B cell (primary cell): ENCODE measurements at regions of chr7 and their contacts with region 1.

Region 1: GRCh38 chr7:158829342-158830210 is at the start of gene ESYT2:
- DNase-seq: peak; percentile 100
- ATAC-seq: peak; percentile 78
- H3K4me3 ChIP-seq: peak within 1 kb of the TSS; percentile 54 to 88 (median 69)
- H3K4me3 Mint-ChIP-seq: peak within 1 kb of the TSS; percentile 92
- H3K27ac ChIP-seq: peak within 1 kb of the TSS; percentile 97 to 99
- H3K27ac Mint-ChIP-seq: peak within 1 kb of the TSS; percentile 97
- H3K4me1 ChIP-seq: peaks cover 16 to 18% of the 10 kb centered on the region in 2 donors
- H3K4me1 Mint-ChIP-seq: peaks cover 22% of the 10 kb centered on the region
- H3K27me3 ChIP-seq: peaks cover 0 to 7% (median 0%) of the 10 kb centered on the region in 4 experiments
- H3K27me3 Mint-ChIP-seq: peaks cover 7% of the 10 kb centered on the region
- CTCF ChIP-seq: no peak
- total RNA-seq, gene ESYT2: 32.4 and 34.2 TPM in 2 replicates

Region 2: GRCh38 chr7:158541346-158542010 is 288.1 kb before region 1 on chr7:
- CTCF ChIA-PET with region 1: no interaction called
- POLR2A ChIA-PET with region 1: no interaction called
- intact Hi-C with region 1: no loop called
- DNase-seq: peak; percentile 79
- ATAC-seq: peak; percentile 86
- H3K4me3 ChIP-seq: peak overlapping the region in 1 of 5 experiments; percentile 38
- H3K4me3 Mint-ChIP-seq: peak overlapping the region; percentile 71
- H3K27ac ChIP-seq: no peak overlapping the region
- H3K27ac Mint-ChIP-seq: peak overlapping the region; percentile 1
- H3K4me1 ChIP-seq: peaks cover 0 to 12% of the 10 kb centered on the region in 2 donors
- H3K4me1 Mint-ChIP-seq: peaks cover 13% of the 10 kb centered on the region
- H3K27me3 ChIP-seq: no peaks in the 10 kb centered on the region
- H3K27me3 Mint-ChIP-seq: no peaks in the 10 kb centered on the region
- CTCF ChIP-seq: no peak

Region 3: DNA sequence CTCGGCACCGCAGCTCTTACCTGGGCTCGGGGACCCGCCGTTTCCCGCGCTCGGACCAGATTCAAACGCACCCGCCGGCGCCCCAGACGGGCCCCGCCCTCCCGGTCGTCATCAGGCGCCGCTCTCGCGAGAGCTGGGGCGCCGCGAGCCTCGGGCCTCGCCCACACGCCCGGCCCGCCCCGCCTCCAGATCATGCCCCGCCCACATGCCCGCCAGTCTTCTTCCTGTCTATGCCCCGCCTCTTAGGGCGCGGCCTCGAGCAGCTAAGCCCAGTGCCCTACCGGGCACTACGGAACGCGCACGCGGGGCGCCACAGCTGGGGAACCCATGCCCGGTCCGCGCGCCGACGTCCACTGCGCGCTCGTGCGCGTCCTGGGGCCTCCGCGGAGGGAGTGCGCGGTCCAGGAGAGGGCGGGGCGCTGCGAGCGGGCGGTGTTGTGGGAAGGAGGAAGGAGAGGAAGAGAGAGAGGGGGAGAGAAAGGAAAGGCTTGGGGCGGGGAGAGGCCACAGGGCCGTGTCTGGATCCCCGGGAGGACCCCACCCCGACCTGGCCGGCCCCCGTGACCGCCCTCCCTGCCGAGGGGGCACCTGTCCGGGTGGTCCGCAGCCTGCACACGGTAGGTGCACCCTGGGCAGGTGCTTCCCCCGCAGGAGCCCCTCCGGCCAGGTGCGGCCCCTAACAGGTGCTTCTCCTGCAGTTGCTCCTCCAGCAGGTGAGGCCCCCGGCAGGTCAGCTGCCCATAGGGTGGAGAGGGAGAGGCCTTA is 124.7 kb before region 1 on chr7 and contains the start of gene NCAPG2:
- CTCF ChIA-PET with region 1: interaction called, 6 read pairs
- POLR2A ChIA-PET with region 1: interaction called, 5 read pairs
- intact Hi-C with region 1: loop called (anchors 1 kb)
- DNase-seq: peak; percentile 98
- ATAC-seq: peak; percentile 97
- H3K4me3 ChIP-seq: peak within 1 kb of the TSS; percentile 24 to 88 (median 81)
- H3K4me3 Mint-ChIP-seq: peak within 1 kb of the TSS; percentile 92
- H3K27ac ChIP-seq: peak within 1 kb of the TSS; percentile 36 to 85
- H3K27ac Mint-ChIP-seq: peak within 1 kb of the TSS; percentile 94
- H3K4me1 ChIP-seq: peaks cover 6 to 12% of the 10 kb centered on the region in 2 donors
- H3K4me1 Mint-ChIP-seq: peaks cover 16% of the 10 kb centered on the region
- H3K27me3 ChIP-seq: no peaks in the 10 kb centered on the region
- H3K27me3 Mint-ChIP-seq: no peaks in the 10 kb centered on the region
- CTCF ChIP-seq: peak; percentile 28
- total RNA-seq, gene NCAPG2: 9.8 and 11.4 TPM in 2 replicates

Region 4: GRCh38 chr7:158818325-158819213 is 11.0 kb before region 1 on chr7:
- CTCF ChIA-PET with region 1: no interaction called
- POLR2A ChIA-PET with region 1: no interaction called
- intact Hi-C with region 1: loop called (anchors 1 kb)
- DNase-seq: peak; percentile 88
- ATAC-seq: peak; percentile 83
- H3K4me3 ChIP-seq: peak overlapping the region in 3 of 5 experiments; percentile 0 to 27 (median 15)
- H3K4me3 Mint-ChIP-seq: peak overlapping the region; percentile 52
- H3K27ac ChIP-seq: peak overlapping the region; percentile 70 to 83
- H3K27ac Mint-ChIP-seq: peak overlapping the region; percentile 77
- H3K4me1 ChIP-seq: peaks cover 31 to 43% of the 10 kb centered on the region in 2 donors
- H3K4me1 Mint-ChIP-seq: peaks cover 61% of the 10 kb centered on the region
- H3K27me3 ChIP-seq: no peaks in the 10 kb centered on the region
- H3K27me3 Mint-ChIP-seq: no peaks in the 10 kb centered on the region
- CTCF ChIP-seq: no peak

Region 5: DNA sequence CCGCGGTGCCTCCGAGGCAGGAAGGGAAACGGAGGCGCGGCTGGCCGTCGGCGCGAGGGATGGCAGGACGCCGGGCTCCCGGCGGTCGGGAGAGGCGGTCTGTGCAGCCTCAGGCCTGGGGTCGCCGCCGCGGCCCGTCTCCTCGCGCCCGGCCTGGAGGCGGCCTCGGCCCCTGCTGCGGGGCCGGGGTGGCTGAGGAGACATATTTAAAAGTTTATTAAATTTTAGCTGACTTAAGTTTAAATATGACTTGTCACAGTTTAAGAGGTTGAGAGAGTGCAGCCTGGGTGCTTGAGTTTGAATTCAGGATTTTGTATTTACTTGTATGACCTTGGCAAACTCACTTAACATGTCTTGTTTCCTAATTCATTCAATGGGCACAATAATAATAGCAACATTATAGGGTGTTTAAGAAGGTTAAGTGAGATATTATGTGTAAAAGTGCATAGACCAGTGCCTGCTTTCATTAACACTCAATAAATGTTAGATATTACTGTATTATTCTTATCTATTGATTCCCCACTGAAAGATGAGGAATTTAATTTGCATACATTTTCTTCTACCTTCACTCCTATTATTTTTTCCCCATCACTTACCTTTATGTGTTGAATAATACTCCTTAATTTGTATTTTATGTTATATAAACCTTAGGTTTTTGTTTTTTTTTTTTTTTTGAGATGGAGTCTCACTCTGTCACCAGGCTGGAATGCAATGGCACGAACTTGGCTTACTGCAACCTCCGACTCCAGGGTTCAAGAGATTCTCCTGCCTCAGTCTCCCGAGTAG is 27.5 kb after region 1 on chr7:
- CTCF ChIA-PET with region 1: no interaction called
- POLR2A ChIA-PET with region 1: interaction called, 4 read pairs
- intact Hi-C with region 1: loop called (anchors 1 kb)
- DNase-seq: no peak
- ATAC-seq: no peak
- H3K4me3 ChIP-seq: peak overlapping the region in 4 of 5 experiments; percentile 56 to 72 (median 68)
- H3K4me3 Mint-ChIP-seq: peak overlapping the region; percentile 97
- H3K27ac ChIP-seq: peak overlapping the region; percentile 34 to 85
- H3K27ac Mint-ChIP-seq: peak overlapping the region; percentile 59
- H3K4me1 ChIP-seq: peaks cover 4 to 5% of the 10 kb centered on the region in 2 donors
- H3K4me1 Mint-ChIP-seq: peaks cover 13% of the 10 kb centered on the region
- H3K27me3 ChIP-seq: peaks cover 0 to 3% (median 0%) of the 10 kb centered on the region in 4 experiments
- H3K27me3 Mint-ChIP-seq: no peaks in the 10 kb centered on the region
- CTCF ChIP-seq: no peak